Posterior cingulate gyrus (tissue), 11 donors: ENCODE measurements at regions of chr4 and their contacts with region 1.

Region 1: DNA sequence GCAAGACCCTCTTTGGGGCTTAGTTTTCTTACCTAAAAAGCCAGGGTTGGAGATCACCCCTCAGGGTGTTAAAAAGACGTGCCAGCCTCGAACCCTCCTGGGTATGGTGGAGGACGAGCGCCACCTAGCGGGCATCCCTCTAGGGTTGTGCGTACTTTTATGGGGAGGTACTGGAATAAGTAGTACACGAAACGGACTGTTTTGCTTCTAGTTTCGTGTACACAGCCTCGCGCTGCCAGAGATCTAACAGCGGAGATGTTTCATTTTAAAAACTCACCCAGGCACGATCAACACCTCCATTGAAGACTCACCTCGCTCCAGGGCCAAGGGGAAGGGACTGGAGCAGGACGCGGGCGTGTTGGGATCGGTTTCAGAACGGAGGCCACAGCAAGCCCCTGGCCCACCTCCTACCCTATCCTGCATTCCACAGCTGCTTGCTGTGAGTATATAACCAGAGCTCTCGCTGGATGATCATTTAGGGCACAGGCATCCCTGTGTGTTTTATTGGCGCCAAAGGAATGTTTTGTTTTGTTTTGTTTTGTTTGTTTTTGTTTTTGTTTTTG is 4.8 kb upstream of the NKX3-2 start:
- DNase-seq: peak in 9 of 10 donors; percentile 52 to 95 (median 82)

Region 2: GRCh38 chr4:12729384-12729783 is 819.7 kb before region 1 on chr4:
- intact Hi-C with region 1: loop called (anchors 2 kb)
- DNase-seq: no peak

Region 3: GRCh38 chr4:12852338-12853307 is 696.4 kb before region 1 on chr4:
- intact Hi-C with region 1: loop called (anchors 2 kb)
- DNase-seq: no peak

Region 4: GRCh38 chr4:13386405-13387107 is 162.5 kb before region 1 on chr4:
- intact Hi-C with region 1: no loop called
- DNase-seq: no peak

Region 5: DNA sequence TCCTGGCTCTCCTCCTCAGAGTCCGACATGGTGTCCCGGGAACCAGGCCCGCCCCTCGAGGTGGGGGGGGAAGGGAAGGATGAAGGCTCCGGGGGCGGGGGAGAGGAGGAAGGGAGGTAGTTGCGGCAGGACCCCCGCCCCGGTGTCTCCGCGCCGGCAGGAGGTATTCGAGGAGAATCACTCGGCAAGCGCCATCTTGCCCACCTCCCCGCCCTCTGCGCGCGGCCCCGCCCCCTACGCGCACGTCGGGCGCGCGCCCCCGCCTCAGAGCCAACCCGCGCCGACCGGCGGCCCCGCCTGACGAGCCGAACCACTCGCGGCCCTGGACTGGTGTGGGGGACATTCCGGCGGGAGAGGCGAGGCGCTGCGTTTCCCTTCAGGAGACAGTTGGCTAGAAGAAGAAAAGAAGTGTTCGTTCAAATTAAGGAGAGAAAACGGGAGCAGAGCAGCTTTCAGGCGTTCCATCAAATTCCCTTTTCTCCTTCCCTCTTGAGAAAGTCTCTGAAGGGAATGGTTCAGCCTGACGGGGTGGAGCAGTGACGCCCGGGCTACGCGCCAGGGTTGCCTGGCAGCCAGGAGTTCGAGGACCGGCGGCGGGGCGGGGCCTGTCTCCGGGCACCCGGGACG is 64.8 kb before region 1 on chr4 and contains the start of gene RAB28:
- intact Hi-C with region 1: loop called (anchors 10 kb)
- DNase-seq: peak; percentile 89 to 99 (median 96)

Region 6: DNA sequence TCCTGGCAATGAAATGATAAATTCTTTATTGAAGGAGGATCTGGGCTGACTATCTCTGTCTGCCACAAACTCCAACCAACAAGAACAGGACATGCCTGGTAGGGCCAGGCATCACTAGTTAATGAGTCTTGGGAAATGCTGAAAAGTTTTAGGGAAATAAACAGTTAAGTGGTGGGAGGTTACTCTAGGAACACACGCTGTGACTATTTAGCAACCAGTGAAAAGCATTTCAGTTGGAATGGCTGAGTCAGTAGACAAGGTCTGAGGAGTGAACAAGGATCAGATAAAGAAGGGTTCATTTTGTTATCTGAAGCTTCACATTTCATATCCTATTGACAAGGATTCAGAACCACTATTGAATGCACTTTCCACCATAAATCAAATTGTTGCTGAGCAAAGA is 473.4 kb after region 1 on chr4:
- intact Hi-C with region 1: no loop called
- DNase-seq: no peak